T-cell (primary cell): ENCODE measurements at regions of chr17 and their contacts with region 1.

Region 1: GRCh38 chr17:2814481-2815341 is 18.5 kb downstream of the RAP1GAP2 start:
- DNase-seq: peak; percentile 85 to 98 (median 97)
- ATAC-seq: peak; percentile 85 to 89 (median 87)
- H3K4me3 ChIP-seq: peak overlapping the region; percentile 42 to 50
- H3K4me3 Mint-ChIP-seq: peak overlapping the region; percentile 56 to 77 (median 72)
- H3K27ac ChIP-seq: peak overlapping the region; percentile 78
- H3K27ac Mint-ChIP-seq: peak overlapping the region; percentile 55 to 84
- H3K4me1 ChIP-seq: peaks cover 11 to 64% of the 10 kb centered on the region in 2 experiments
- H3K4me1 Mint-ChIP-seq: peaks cover 30 to 56% (median 32%) of the 10 kb centered on the region in 3 donors
- H3K27me3 ChIP-seq: no peaks in the 10 kb centered on the region
- H3K27me3 Mint-ChIP-seq: no peaks in the 10 kb centered on the region

Region 2: DNA sequence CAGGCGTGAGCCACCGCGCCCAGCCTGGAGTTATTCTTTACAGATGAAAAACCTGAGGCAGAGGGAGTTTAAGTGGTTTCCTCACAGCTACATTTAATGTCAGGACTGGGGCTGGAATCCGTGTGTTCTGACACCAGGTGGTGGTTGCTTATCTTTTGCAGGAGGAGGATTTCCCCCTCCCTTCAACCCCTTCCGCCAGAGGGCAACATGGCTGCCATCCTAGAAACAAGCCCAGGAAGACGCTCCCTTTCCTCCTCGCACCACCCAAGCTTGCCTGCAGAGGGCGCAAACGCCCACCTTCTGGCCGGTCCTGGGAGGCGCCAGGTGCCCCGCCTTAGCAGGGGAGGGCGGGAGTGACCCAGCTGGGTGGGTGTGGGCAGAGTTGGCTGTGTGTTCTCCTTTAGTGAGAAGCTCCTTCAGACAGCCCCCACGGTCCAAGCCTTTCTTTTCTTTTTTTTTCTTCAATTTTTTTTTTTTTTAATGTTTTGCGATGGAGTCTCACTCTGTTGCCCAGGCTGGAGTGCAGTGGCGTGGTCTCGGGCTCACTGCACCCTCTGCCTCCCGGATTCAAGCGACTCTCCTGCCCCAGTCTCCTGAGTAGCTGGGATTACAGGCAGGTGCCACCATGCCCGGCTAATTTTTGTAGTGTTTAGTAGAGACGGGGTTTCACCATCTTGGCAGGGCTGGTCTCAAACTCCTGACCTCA is 28.4 kb before region 1 on chr17:
- CTCF ChIA-PET with region 1: interaction called, 5 to 43 read pairs
- POLR2A ChIA-PET with region 1: interaction called, 4 to 5 read pairs
- DNase-seq: peak; percentile 75 to 94 (median 86)
- ATAC-seq: peak; percentile 97 to 99 (median 98)
- H3K4me3 ChIP-seq: no peak overlapping the region
- H3K4me3 Mint-ChIP-seq: no peak overlapping the region
- H3K27ac ChIP-seq: no peak overlapping the region
- H3K27ac Mint-ChIP-seq: no peak overlapping the region
- H3K4me1 ChIP-seq: peaks cover 5 to 25% of the 10 kb centered on the region in 2 experiments
- H3K4me1 Mint-ChIP-seq: peaks cover 6 to 24% (median 14%) of the 10 kb centered on the region in 3 donors
- H3K27me3 ChIP-seq: peaks cover 0 to 6% of the 10 kb centered on the region in 2 experiments
- H3K27me3 Mint-ChIP-seq: no peaks in the 10 kb centered on the region

Region 3: GRCh38 chr17:2796164-2797125 is 18.3 kb before region 1 on chr17 and contains the start of gene RAP1GAP2:
- CTCF ChIA-PET with region 1: interaction called in 1 of 2 experiments, 42 read pairs
- POLR2A ChIA-PET with region 1: interaction called, 6 to 9 read pairs
- DNase-seq: peak in 34 of 35 experiments; percentile 51 to 86 (median 78)
- ATAC-seq: peak; percentile 86 to 91 (median 89)
- H3K4me3 ChIP-seq: peak within 1 kb of the TSS; percentile 79 to 85
- H3K4me3 Mint-ChIP-seq: peak within 1 kb of the TSS; percentile 76 to 90 (median 81)
- H3K27ac ChIP-seq: no peak within 1 kb of the TSS
- H3K27ac Mint-ChIP-seq: peak within 1 kb of the TSS; percentile 71 to 84
- H3K4me1 ChIP-seq: peaks cover 34 to 90% of the 10 kb centered on the region in 2 experiments
- H3K4me1 Mint-ChIP-seq: peaks cover 78 to 88% (median 82%) of the 10 kb centered on the region in 3 donors
- H3K27me3 ChIP-seq: peaks cover 0 to 6% of the 10 kb centered on the region in 2 experiments
- H3K27me3 Mint-ChIP-seq: no peaks in the 10 kb centered on the region
- total RNA-seq, gene RAP1GAP2: 8.0 to 77.7 (median 13.3) TPM

Region 4: GRCh38 chr17:2828397-2829038 is 13.8 kb after region 1 on chr17:
- CTCF ChIA-PET with region 1: interaction called in 1 of 2 experiments, 15 read pairs
- POLR2A ChIA-PET with region 1: interaction called in 1 of 2 experiments, 4 read pairs
- DNase-seq: peak; percentile 26 to 83 (median 68)
- ATAC-seq: peak; percentile 69 to 91 (median 86)
- H3K4me3 ChIP-seq: no peak overlapping the region
- H3K4me3 Mint-ChIP-seq: peak overlapping the region in 2 of 3 donors; percentile 17 to 60
- H3K27ac ChIP-seq: no peak overlapping the region
- H3K27ac Mint-ChIP-seq: no peak overlapping the region
- H3K4me1 ChIP-seq: peaks cover 2 to 42% of the 10 kb centered on the region in 2 experiments
- H3K4me1 Mint-ChIP-seq: peaks cover 25 to 35% (median 33%) of the 10 kb centered on the region in 3 donors
- H3K27me3 ChIP-seq: peaks cover 0 to 4% of the 10 kb centered on the region in 2 experiments
- H3K27me3 Mint-ChIP-seq: no peaks in the 10 kb centered on the region

Region 5: GRCh38 chr17:3015890-3016289 is 201.2 kb after region 1 on chr17:
- CTCF ChIA-PET with region 1: interaction called in 1 of 2 experiments, 10 read pairs
- POLR2A ChIA-PET with region 1: no interaction called
- DNase-seq: no peak
- ATAC-seq: no peak
- H3K4me3 ChIP-seq: no peak overlapping the region
- H3K4me3 Mint-ChIP-seq: no peak overlapping the region
- H3K27ac ChIP-seq: no peak overlapping the region
- H3K27ac Mint-ChIP-seq: no peak overlapping the region
- H3K4me1 ChIP-seq: no peaks in the 10 kb centered on the region
- H3K4me1 Mint-ChIP-seq: no peaks in the 10 kb centered on the region
- H3K27me3 ChIP-seq: no peaks in the 10 kb centered on the region
- H3K27me3 Mint-ChIP-seq: no peaks in the 10 kb centered on the region

Region 6: GRCh38 chr17:4340914-4341615 is 1526.4 kb after region 1 on chr17:
- CTCF ChIA-PET with region 1: no interaction called
- POLR2A ChIA-PET with region 1: no interaction called
- DNase-seq: no peak
- ATAC-seq: no peak
- H3K4me3 ChIP-seq: no peak overlapping the region
- H3K4me3 Mint-ChIP-seq: no peak overlapping the region
- H3K27ac ChIP-seq: no peak overlapping the region
- H3K27ac Mint-ChIP-seq: no peak overlapping the region
- H3K4me1 ChIP-seq: peaks cover 2 to 25% of the 10 kb centered on the region in 2 experiments
- H3K4me1 Mint-ChIP-seq: peaks cover 43 to 50% (median 46%) of the 10 kb centered on the region in 3 donors
- H3K27me3 ChIP-seq: no peaks in the 10 kb centered on the region
- H3K27me3 Mint-ChIP-seq: no peaks in the 10 kb centered on the region